HEK293T (cell line): ENCODE measurements at regions of chr2 and their contacts with region 1.

Region 1: DNA sequence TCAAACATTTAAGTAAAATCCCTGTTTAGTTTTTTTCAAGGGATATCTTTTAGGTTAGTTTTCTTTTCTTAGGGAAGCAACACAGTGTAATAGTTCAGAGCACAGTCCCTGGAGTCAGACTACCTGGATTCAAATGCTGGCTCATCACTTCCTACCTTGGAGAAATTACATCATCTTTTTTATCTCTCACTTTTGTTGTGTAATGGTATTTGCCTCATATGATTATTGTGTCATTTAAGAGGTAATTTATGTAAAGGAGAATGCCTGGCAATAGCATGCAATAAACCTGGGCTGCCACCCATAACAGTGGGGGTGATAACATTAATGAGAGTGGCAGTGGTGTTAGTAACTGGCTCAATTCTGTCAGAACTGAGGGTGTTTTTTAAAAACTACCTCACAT is 26.3 kb downstream of the ERLEC1 start:
- DNase-seq: no peak

Region 2: DNA sequence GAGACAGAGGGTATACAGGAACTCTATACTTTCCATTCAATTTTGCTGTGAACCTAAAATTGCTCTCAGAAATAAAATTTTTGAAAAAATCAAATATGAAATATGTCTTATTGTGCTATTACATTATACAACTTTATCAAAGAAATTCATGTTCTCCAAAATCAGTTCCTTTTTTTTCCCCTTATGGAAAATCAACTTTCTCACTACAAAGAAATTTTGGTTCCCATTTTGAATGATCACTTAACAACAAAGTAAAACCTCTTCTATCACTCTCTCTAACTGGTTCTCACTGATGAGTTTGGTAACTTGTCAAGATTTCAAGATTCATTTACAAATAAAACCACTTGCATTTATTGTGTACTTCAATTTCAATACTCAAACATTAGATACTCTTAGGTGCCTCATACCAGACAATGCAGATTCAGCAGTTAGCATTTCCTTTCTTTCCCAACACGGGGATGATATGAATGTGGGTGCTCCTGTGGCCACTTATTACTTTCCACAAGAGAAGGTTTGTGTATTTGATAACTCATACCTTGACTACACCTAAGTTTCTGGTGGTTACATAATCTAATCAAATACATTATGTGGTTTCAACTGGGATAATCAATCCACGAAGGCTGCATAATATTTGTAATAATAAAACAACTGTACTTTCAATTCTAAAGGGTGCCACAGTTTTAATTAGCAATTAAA is 151.3 kb after region 1 on chr2:
- CTCF ChIA-PET with region 1: interaction called, 10 read pairs
- POLR2A ChIA-PET with region 1: no interaction called
- DNase-seq: no peak